ENCODE measurements at regions of chr4 and their contacts with region 1.

Region 1: GRCh38 chr4:48047421-48047844 is 30.9 kb downstream of the NIPAL1 start:
- DNase-seq: peak; percentile 54 to 74 (median 66)
- H3K4me3 ChIP-seq: peak overlapping the region in 1 of 3 experiments; percentile 58
- H3K4me3 Mint-ChIP-seq: peak overlapping the region; percentile 60 to 89
- H3K27ac ChIP-seq: peak overlapping the region in 1 of 2 donors; percentile 22
- H3K27ac Mint-ChIP-seq: peak overlapping the region in 5 of 7 donors; percentile 38 to 87 (median 66)
- H3K4me1 ChIP-seq: peaks cover 31 to 32% of the 10 kb centered on the region in 2 donors
- H3K4me1 Mint-ChIP-seq: peaks cover 47% of the 10 kb centered on the region
- H3K27me3 ChIP-seq: peaks cover 32 to 38% of the 10 kb centered on the region in 2 donors
- H3K27me3 Mint-ChIP-seq: peaks cover 32 to 57% (median 41%) of the 10 kb centered on the region in 3 donors
- CTCF ChIP-seq: no peak

Region 2: GRCh38 chr4:47926639-47927258 is 120.7 kb before region 1 on chr4:
- intact Hi-C with region 1: loop called in 1 of 2 experiments (anchors 10 kb)
- DNase-seq: peak; percentile 28 to 44 (median 30)
- H3K4me3 ChIP-seq: peak overlapping the region in 1 of 3 experiments; percentile 68
- H3K4me3 Mint-ChIP-seq: peak overlapping the region; percentile 70 to 81
- H3K27ac ChIP-seq: no peak overlapping the region
- H3K27ac Mint-ChIP-seq: peak overlapping the region in 3 of 7 donors; percentile 22 to 42 (median 22)
- H3K4me1 ChIP-seq: peaks cover 15 to 53% of the 10 kb centered on the region in 2 donors
- H3K4me1 Mint-ChIP-seq: peaks cover 48% of the 10 kb centered on the region
- H3K27me3 ChIP-seq: no peaks in the 10 kb centered on the region
- H3K27me3 Mint-ChIP-seq: peaks cover 0 to 5% (median 2%) of the 10 kb centered on the region in 3 donors
- CTCF ChIP-seq: peak; percentile 67

Region 3: DNA sequence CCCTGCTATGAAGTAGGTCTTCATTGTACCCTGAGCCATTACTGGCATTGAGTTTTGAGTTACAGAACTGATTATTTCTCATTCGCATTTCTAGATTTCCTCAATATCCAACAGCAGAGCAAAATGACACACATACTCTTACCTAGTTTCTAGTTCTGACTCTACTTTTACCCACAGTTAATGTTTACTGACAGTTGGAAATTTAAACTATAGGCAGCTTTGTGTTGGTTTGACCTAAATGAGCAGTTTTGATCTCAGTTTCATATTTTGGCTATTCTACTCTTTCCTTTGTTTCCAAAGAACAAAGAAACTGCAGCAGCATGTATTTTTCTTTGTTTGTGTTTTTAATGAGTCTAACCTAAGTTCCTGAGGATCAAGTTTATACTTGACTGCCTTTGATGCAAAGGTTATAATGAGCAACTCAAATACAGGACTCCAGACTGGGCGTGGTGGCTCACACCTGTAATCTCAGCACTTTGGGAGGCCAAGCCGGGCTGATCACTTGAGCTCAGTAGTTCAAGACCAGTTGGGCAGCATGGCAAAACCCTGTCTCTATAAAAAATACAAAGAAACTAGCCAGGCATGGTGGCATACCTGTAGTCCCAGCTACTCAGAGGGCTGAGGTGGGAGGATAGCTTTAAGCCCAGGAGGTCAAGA is 56.2 kb after region 1 on chr4:
- intact Hi-C with region 1: no loop called
- DNase-seq: no peak
- H3K4me3 ChIP-seq: no peak overlapping the region
- H3K4me3 Mint-ChIP-seq: no peak overlapping the region
- H3K27ac ChIP-seq: no peak overlapping the region
- H3K27ac Mint-ChIP-seq: no peak overlapping the region
- H3K4me1 ChIP-seq: no peaks in the 10 kb centered on the region
- H3K4me1 Mint-ChIP-seq: no peaks in the 10 kb centered on the region
- H3K27me3 ChIP-seq: no peaks in the 10 kb centered on the region
- H3K27me3 Mint-ChIP-seq: peaks cover 0 to 4% (median 1%) of the 10 kb centered on the region in 3 donors
- CTCF ChIP-seq: no peak

Measured in CD14-positive monocyte (primary cell).